Naive thymus-derived CD4-positive, alpha-beta T cell (primary cell): ENCODE measurements at regions of chr21 and their contacts with region 1.

Region 1: GRCh38 chr21:29073222-29074006 is at the start of gene CCT8:
- DNase-seq: peak; percentile 93 to 100 (median 98)
- ATAC-seq: peak; percentile 96
- H3K4me3 ChIP-seq: peak within 1 kb of the TSS; percentile 80
- H3K4me3 Mint-ChIP-seq: peak within 1 kb of the TSS; percentile 98 to 100 (median 99)
- H3K27ac ChIP-seq: peak within 1 kb of the TSS; percentile 88
- H3K27ac Mint-ChIP-seq: peak within 1 kb of the TSS; percentile 97 to 100 (median 99)
- H3K4me1 ChIP-seq: peaks cover 24 to 25% of the 10 kb centered on the region in 2 donors
- H3K4me1 Mint-ChIP-seq: peaks cover 19 to 78% (median 67%) of the 10 kb centered on the region in 7 donors
- H3K27me3 ChIP-seq: no peaks in the 10 kb centered on the region
- H3K27me3 Mint-ChIP-seq: no peaks in the 10 kb centered on the region
- total RNA-seq, gene CCT8: 87.6 to 223 (median 126) TPM

Region 2: DNA sequence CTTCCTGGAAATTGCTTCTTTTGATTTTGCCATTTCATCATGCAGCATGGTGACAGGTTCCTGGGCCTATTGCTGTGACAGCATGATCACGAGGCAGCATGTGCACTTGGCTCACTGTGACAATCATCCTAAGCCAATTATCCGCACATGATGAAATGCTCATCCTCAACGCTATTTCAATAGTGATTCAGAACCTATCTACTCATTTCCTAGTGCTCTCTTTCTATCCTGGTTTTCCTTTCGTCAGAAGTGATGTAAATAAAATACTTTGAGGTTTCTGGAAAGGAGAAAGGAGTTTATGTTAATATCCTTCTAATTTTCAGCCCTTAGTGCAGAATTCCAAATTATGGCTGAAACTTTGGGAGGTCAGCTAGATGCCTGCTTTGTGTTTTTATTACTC is 1995.9 kb before region 1 on chr21:
- CTCF ChIA-PET with region 1: no interaction called
- POLR2A ChIA-PET with region 1: no interaction called
- intact Hi-C with region 1: no loop called
- DNase-seq: no peak
- ATAC-seq: no peak
- H3K4me3 ChIP-seq: no peak overlapping the region
- H3K4me3 Mint-ChIP-seq: no peak overlapping the region
- H3K27ac ChIP-seq: no peak overlapping the region
- H3K27ac Mint-ChIP-seq: no peak overlapping the region
- H3K4me1 ChIP-seq: no peaks in the 10 kb centered on the region
- H3K4me1 Mint-ChIP-seq: no peaks in the 10 kb centered on the region
- H3K27me3 ChIP-seq: no peaks in the 10 kb centered on the region
- H3K27me3 Mint-ChIP-seq: no peaks in the 10 kb centered on the region

Region 3: DNA sequence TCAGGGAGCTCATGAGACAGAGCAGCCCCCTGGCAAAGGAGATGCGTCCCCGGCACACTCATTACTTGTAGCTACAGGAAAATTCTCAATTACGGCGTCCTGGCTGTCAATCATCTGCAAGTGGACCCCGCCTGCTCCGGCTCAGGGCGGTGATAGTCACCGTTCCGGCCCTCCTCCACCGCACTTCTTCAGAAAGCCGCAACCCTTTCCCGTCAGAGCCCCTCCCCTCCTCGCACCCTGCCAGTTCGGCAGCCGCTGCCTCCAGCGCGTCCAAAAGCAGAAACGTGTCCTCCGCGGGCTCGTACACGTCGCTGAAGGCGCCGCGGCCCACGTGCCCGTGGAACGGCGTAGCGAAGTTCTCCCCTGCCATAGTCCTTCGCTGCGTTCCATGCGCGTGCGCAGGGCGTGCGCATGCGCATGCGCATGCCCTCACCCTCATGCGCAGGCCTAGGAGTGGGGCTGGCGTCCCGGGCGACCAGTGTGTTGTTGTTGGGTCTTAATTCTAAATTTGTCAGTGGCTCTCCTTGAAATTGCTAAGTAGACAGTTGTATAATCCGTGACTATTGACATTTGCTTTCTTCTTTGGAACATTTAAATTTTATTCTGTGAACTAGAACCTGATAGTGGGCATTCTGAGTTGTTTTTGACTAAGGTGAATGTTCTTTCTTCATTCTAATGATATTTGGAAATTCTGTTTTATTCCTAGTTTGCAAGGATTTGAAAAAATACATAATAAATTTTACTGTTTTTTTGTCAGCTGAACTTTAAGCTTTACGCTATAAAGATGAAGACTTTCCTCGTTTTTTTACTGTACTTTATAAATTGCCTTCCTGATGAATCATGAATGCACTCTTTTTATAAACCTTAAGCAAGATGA is 188.2 kb before region 1 on chr21:
- CTCF ChIA-PET with region 1: no interaction called
- POLR2A ChIA-PET with region 1: interaction called, 6 read pairs
- intact Hi-C with region 1: loop called (anchors 1 kb)
- DNase-seq: peak; percentile 84 to 95 (median 92)
- ATAC-seq: peak; percentile 95
- H3K4me3 ChIP-seq: peak overlapping the region; percentile 71
- H3K4me3 Mint-ChIP-seq: peak overlapping the region; percentile 89 to 99 (median 94)
- H3K27ac ChIP-seq: peak overlapping the region; percentile 80
- H3K27ac Mint-ChIP-seq: peak overlapping the region; percentile 98 to 99 (median 99)
- H3K4me1 ChIP-seq: peaks cover 9 to 14% of the 10 kb centered on the region in 2 donors
- H3K4me1 Mint-ChIP-seq: peaks cover 8 to 25% (median 20%) of the 10 kb centered on the region in 7 donors
- H3K27me3 ChIP-seq: no peaks in the 10 kb centered on the region
- H3K27me3 Mint-ChIP-seq: peaks cover 0 to 29% (median 0%) of the 10 kb centered on the region in 5 donors

Region 4: GRCh38 chr21:29002442-29003144 is 70.8 kb before region 1 on chr21:
- CTCF ChIA-PET with region 1: no interaction called
- POLR2A ChIA-PET with region 1: interaction called, 42 read pairs
- intact Hi-C with region 1: loop called (anchors 1 kb)
- DNase-seq: peak; percentile 90 to 96 (median 94)
- ATAC-seq: peak; percentile 100
- H3K4me3 ChIP-seq: peak overlapping the region; percentile 86
- H3K4me3 Mint-ChIP-seq: peak overlapping the region; percentile 85 to 95 (median 93)
- H3K27ac ChIP-seq: peak overlapping the region; percentile 92
- H3K27ac Mint-ChIP-seq: peak overlapping the region; percentile 97 to 99 (median 99)
- H3K4me1 ChIP-seq: peaks cover 0 to 3% of the 10 kb centered on the region in 2 donors
- H3K4me1 Mint-ChIP-seq: peaks cover 0 to 22% (median 10%) of the 10 kb centered on the region in 7 donors
- H3K27me3 ChIP-seq: no peaks in the 10 kb centered on the region
- H3K27me3 Mint-ChIP-seq: no peaks in the 10 kb centered on the region

Region 5: GRCh38 chr21:29056005-29056404 is 17.4 kb before region 1 on chr21:
- CTCF ChIA-PET with region 1: no interaction called
- POLR2A ChIA-PET with region 1: interaction called, 3 read pairs
- intact Hi-C with region 1: loop called in 1 of 2 experiments (anchors 1 kb)
- DNase-seq: no peak
- ATAC-seq: no peak
- H3K4me3 ChIP-seq: no peak overlapping the region
- H3K4me3 Mint-ChIP-seq: no peak overlapping the region
- H3K27ac ChIP-seq: no peak overlapping the region
- H3K27ac Mint-ChIP-seq: peak overlapping the region in 3 of 9 donors; percentile 2 to 28 (median 12)
- H3K4me1 ChIP-seq: no peaks in the 10 kb centered on the region
- H3K4me1 Mint-ChIP-seq: peaks cover 0 to 2% (median 0%) of the 10 kb centered on the region in 7 donors
- H3K27me3 ChIP-seq: no peaks in the 10 kb centered on the region
- H3K27me3 Mint-ChIP-seq: no peaks in the 10 kb centered on the region

Region 6: DNA sequence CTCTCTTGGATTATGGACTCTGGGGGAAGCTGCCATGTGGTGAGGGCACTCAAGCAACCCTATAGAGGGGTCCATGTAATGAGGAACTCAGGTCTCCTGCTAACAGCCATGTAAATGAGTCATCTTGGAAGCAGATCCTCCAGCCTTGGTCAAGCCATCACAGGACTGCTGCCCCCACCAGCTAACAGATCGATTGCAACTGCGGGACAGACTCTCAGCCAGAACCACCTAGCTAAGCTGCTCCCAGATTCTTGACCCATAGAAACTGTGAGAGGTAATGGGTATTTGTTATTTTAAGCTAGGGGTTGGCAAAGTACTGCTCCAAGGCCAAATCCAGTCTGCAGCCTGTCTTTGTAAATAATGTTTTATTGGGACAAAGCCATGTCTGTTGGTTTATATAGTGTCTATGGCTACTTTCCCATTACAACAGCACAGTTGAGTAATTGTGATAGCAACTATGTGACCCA is 29.4 kb after region 1 on chr21:
- CTCF ChIA-PET with region 1: no interaction called
- POLR2A ChIA-PET with region 1: no interaction called
- intact Hi-C with region 1: no loop called
- DNase-seq: no peak
- ATAC-seq: no peak
- H3K4me3 ChIP-seq: no peak overlapping the region
- H3K4me3 Mint-ChIP-seq: no peak overlapping the region
- H3K27ac ChIP-seq: no peak overlapping the region
- H3K27ac Mint-ChIP-seq: no peak overlapping the region
- H3K4me1 ChIP-seq: no peaks in the 10 kb centered on the region
- H3K4me1 Mint-ChIP-seq: peaks cover 0 to 7% (median 0%) of the 10 kb centered on the region in 7 donors
- H3K27me3 ChIP-seq: no peaks in the 10 kb centered on the region
- H3K27me3 Mint-ChIP-seq: no peaks in the 10 kb centered on the region

Region 7: GRCh38 chr21:29125191-29125590 is 51.8 kb after region 1 on chr21:
- CTCF ChIA-PET with region 1: no interaction called
- POLR2A ChIA-PET with region 1: no interaction called
- intact Hi-C with region 1: no loop called
- DNase-seq: no peak
- ATAC-seq: no peak
- H3K4me3 ChIP-seq: no peak overlapping the region
- H3K4me3 Mint-ChIP-seq: no peak overlapping the region
- H3K27ac ChIP-seq: no peak overlapping the region
- H3K27ac Mint-ChIP-seq: no peak overlapping the region
- H3K4me1 ChIP-seq: no peaks in the 10 kb centered on the region
- H3K4me1 Mint-ChIP-seq: peaks cover 0 to 4% (median 0%) of the 10 kb centered on the region in 7 donors
- H3K27me3 ChIP-seq: no peaks in the 10 kb centered on the region
- H3K27me3 Mint-ChIP-seq: peaks cover 0 to 3% (median 0%) of the 10 kb centered on the region in 5 donors

Region 8: DNA sequence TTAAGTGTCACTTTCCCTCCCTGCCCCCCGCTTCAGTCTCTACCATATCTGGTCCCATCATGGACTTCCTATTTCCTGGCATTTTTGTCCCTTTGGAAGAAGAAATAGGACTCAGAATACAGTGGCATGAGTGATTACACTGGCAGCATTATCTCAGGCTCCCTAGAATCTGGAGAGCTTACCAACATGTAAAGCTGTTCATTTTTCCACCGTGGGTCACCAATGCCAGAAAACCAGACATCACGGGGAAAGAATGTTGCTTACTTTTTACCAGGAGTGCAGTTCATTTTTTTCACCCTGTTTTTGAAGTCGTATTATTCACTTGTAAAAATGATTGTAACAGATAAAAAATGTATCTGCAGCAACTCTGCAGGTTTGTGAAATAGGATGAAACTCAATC is 270.1 kb after region 1 on chr21:
- CTCF ChIA-PET with region 1: no interaction called
- POLR2A ChIA-PET with region 1: interaction called, 3 read pairs
- intact Hi-C with region 1: loop called in 1 of 2 experiments (anchors 1 kb)
- DNase-seq: no peak
- ATAC-seq: no peak
- H3K4me3 ChIP-seq: no peak overlapping the region
- H3K4me3 Mint-ChIP-seq: no peak overlapping the region
- H3K27ac ChIP-seq: no peak overlapping the region
- H3K27ac Mint-ChIP-seq: no peak overlapping the region
- H3K4me1 ChIP-seq: peaks cover 0 to 6% of the 10 kb centered on the region in 2 donors
- H3K4me1 Mint-ChIP-seq: peaks cover 4 to 31% (median 15%) of the 10 kb centered on the region in 7 donors
- H3K27me3 ChIP-seq: no peaks in the 10 kb centered on the region
- H3K27me3 Mint-ChIP-seq: no peaks in the 10 kb centered on the region